ENCODE measurements at regions of chr5 and their contacts with region 1.

Region 1: DNA sequence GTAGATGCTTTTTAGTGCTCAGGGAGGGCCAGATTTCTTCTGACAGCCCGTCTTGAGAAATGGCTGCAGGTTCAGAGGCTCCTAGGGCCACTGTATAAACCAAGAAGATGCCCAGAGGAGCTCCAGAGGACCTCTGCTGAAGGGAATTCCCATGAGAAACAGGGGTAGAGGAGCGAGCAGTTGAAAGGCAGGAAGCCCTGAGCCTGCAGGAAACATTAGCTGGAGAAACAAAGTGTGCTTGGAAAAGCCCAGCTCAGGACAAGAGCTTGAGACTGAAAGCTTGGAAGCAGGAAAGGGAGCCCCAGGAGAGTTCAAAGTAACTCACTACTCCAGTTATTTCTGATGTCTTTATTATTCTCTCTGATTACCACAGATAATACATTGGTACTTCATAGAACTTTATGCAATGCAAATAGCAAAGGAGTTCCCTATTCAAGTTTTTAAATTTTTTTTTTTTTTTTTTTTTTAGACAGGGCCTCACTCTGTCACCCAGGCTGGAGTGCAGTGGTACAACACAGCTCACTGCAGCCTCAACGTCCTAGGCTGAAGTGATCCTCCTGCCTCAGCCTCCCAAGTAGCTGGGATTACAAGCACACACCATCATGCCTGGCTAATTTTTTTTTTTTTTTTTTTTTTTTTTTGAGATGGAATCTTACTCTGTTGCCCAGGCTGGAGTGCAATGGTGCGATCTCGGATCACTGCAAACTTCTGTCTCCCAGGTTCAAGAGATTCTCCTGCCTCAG is 16.5 kb downstream of the HBEGF start:
- DNase-seq: no peak
- H3K4me3 ChIP-seq: no peak overlapping the region
- H3K27ac ChIP-seq: no peak overlapping the region
- H3K4me1 ChIP-seq: peaks cover 24% of the 10 kb centered on the region
- H3K27me3 ChIP-seq: no peaks in the 10 kb centered on the region
- CTCF ChIP-seq: no peak

Region 2: DNA sequence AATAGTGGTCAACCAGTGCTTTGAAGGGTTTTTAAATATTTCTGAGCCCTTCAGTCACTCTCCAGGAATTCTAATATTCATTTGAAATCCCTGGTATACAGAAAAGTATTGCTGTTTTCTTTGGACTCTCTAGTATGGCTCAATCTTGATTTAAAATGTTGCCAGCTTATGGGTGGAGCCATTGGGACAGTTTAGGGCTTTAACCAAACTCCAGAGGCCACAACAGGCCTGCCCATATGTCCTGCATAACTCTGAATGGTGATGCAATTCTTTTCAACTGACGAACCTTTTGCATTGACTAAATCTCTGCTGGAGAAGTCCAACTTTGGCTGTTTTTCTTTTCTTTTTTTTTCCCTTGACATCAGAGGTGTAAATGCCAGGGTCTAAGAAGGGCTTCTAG is 61.4 kb after region 1 on chr5:
- CTCF ChIA-PET with region 1: no interaction called
- POLR2A ChIA-PET with region 1: no interaction called
- intact Hi-C with region 1: no loop called
- DNase-seq: no peak
- H3K4me3 ChIP-seq: no peak overlapping the region
- H3K27ac ChIP-seq: peak overlapping the region; percentile 17; the same call in 1 of the 2 replicates
- H3K4me1 ChIP-seq: no peaks in the 10 kb centered on the region
- H3K27me3 ChIP-seq: no peaks in the 10 kb centered on the region
- CTCF ChIP-seq: no peak

Region 3: DNA sequence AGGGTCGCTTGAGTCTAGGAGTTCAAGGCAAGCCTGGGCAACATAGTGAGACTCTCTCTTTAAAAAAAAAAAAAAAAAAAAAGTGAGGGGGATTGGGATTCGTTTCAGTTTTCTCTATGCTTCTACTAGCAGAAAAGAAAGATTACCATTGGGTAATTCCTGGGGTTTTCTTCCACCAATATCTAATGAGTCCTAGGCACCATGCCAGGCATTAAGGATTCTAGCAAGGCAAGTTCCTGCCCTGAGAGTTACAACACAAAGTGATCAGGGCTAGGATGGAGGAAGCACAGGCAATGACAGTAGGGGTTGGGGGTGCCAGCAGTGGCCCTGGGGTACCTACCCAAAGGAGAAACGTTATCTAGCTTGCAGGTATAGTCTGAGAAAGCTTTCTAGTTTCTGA is 1457.5 kb after region 1 on chr5:
- CTCF ChIA-PET with region 1: interaction called, 16 read pairs
- POLR2A ChIA-PET with region 1: no interaction called
- intact Hi-C with region 1: no loop called
- DNase-seq: no peak
- H3K4me3 ChIP-seq: no peak overlapping the region
- H3K27ac ChIP-seq: no peak overlapping the region
- H3K4me1 ChIP-seq: peaks cover 27% of the 10 kb centered on the region
- H3K27me3 ChIP-seq: no peaks in the 10 kb centered on the region
- CTCF ChIP-seq: no peak

Measured in PC-9 (cell line).